Mammary epithelial cell (primary cell): ENCODE measurements at regions of chr3 and their contacts with region 1.

Region 1: GRCh38 chr3:129947538-129948240 is 26.8 kb upstream of the TRH start:
- DNase-seq: no peak
- H3K4me3 ChIP-seq: no peak overlapping the region
- H3K27ac ChIP-seq: no peak overlapping the region
- H3K4me1 ChIP-seq: no peaks in the 10 kb centered on the region
- H3K27me3 ChIP-seq: peaks cover 2% of the 10 kb centered on the region
- CTCF ChIP-seq: no peak

Region 2: GRCh38 chr3:128084391-128084963 is 1863.2 kb before region 1 on chr3:
- CTCF ChIA-PET with region 1: no interaction called
- dilution Hi-C with region 1: no loop called
- in situ Hi-C with region 1: no loop called
- intact Hi-C with region 1: no loop called
- DNase-seq: no peak
- H3K4me3 ChIP-seq: no peak overlapping the region
- H3K27ac ChIP-seq: no peak overlapping the region
- H3K4me1 ChIP-seq: peaks cover 25% of the 10 kb centered on the region
- H3K27me3 ChIP-seq: no peaks in the 10 kb centered on the region
- CTCF ChIP-seq: no peak

Region 3: GRCh38 chr3:129837065-129837642 is 110.5 kb before region 1 on chr3:
- CTCF ChIA-PET with region 1: no interaction called
- dilution Hi-C with region 1: no loop called
- in situ Hi-C with region 1: no loop called
- intact Hi-C with region 1: no loop called
- DNase-seq: peak; percentile 41
- H3K4me3 ChIP-seq: no peak overlapping the region
- H3K27ac ChIP-seq: no peak overlapping the region
- H3K4me1 ChIP-seq: peaks cover 1% of the 10 kb centered on the region
- H3K27me3 ChIP-seq: no peaks in the 10 kb centered on the region
- CTCF ChIP-seq: no peak

Region 4: GRCh38 chr3:129975038-129975704 is 27.5 kb after region 1 on chr3:
- CTCF ChIA-PET with region 1: no interaction called
- dilution Hi-C with region 1: no loop called
- in situ Hi-C with region 1: no loop called
- intact Hi-C with region 1: no loop called
- DNase-seq: no peak
- H3K4me3 ChIP-seq: no peak overlapping the region
- H3K27ac ChIP-seq: no peak overlapping the region
- H3K4me1 ChIP-seq: no peaks in the 10 kb centered on the region
- H3K27me3 ChIP-seq: peaks cover 35% of the 10 kb centered on the region
- CTCF ChIP-seq: no peak

Region 5: DNA sequence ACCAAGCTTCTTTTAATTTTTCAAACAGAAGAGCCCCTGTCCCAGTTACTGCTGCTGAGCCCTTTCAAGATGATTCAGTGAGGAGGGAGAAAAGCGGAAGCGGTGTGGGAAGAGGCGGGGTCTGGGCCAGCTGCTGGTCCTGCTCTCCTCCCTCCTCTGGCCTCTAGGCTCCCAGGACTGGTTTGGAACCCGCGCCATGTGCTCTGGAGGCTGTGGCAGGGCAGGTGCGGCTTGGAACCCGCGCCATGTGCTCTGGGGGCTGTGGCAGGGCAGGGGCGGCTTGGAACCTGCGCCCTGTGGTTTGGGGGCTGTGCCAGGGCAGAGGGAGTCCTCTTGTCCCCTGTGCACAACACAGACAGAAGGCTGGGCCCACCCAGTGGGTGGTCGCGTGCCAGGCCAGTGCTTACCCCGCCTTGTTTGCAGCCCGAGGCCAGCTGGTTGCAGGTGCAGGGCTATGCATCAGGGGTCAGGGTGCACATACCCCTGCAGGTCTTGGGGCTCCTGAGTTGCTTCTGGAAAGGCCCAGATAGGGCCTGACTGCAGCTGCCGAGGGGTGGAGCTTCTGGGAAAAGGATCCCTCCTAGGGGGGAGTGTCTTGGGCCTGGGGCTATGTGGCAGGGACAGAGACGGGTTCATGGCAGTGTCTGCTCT is 146.2 kb after region 1 on chr3:
- CTCF ChIA-PET with region 1: no interaction called
- dilution Hi-C with region 1: loop called (anchors 5 kb)
- in situ Hi-C with region 1: loop called (anchors 10 kb)
- intact Hi-C with region 1: loop called (anchors 2 kb)
- DNase-seq: no peak
- H3K4me3 ChIP-seq: no peak overlapping the region
- H3K27ac ChIP-seq: no peak overlapping the region
- H3K4me1 ChIP-seq: peaks cover 10% of the 10 kb centered on the region
- H3K27me3 ChIP-seq: no peaks in the 10 kb centered on the region
- CTCF ChIP-seq: no peak